Activated CD4-positive, alpha-beta memory T cell treated with anti-CD3 and anti-CD28 coated beads for 36 hours (primary cell): ENCODE measurements at regions of chr4 and their contacts with region 1.

Region 1: GRCh38 chr4:145808021-145808650 is 128.2 kb downstream of the C4orf51 start:
- DNase-seq: peak; percentile 60
- H3K4me3 Mint-ChIP-seq: peak overlapping the region; percentile 30
- H3K27ac Mint-ChIP-seq: peak overlapping the region; percentile 89
- H3K4me1 Mint-ChIP-seq: peaks cover 65% of the 10 kb centered on the region
- H3K27me3 Mint-ChIP-seq: no peaks in the 10 kb centered on the region

Region 2: GRCh38 chr4:145180298-145181090 is 627.6 kb before region 1 on chr4 and contains the start of gene OTUD4:
- CTCF ChIA-PET with region 1: no interaction called
- POLR2A ChIA-PET with region 1: no interaction called
- intact Hi-C with region 1: loop called (anchors 2 kb)
- DNase-seq: peak; percentile 97
- H3K4me3 Mint-ChIP-seq: peak within 1 kb of the TSS; percentile 96
- H3K27ac Mint-ChIP-seq: peak within 1 kb of the TSS; percentile 98
- H3K4me1 Mint-ChIP-seq: peaks cover 25% of the 10 kb centered on the region
- H3K27me3 Mint-ChIP-seq: no peaks in the 10 kb centered on the region
- total RNA-seq, gene OTUD4: 41.5 to 43.3 TPM

Region 3: GRCh38 chr4:145625677-145626622 is 182.2 kb before region 1 on chr4:
- CTCF ChIA-PET with region 1: no interaction called
- POLR2A ChIA-PET with region 1: no interaction called
- intact Hi-C with region 1: no loop called
- DNase-seq: no peak
- H3K4me3 Mint-ChIP-seq: no peak overlapping the region
- H3K27ac Mint-ChIP-seq: no peak overlapping the region
- H3K4me1 Mint-ChIP-seq: peaks cover 43% of the 10 kb centered on the region
- H3K27me3 Mint-ChIP-seq: no peaks in the 10 kb centered on the region

Region 4: GRCh38 chr4:145732895-145733880 is 74.9 kb before region 1 on chr4:
- CTCF ChIA-PET with region 1: no interaction called
- POLR2A ChIA-PET with region 1: no interaction called
- intact Hi-C with region 1: loop called (anchors 1 kb)
- DNase-seq: peak; percentile 92
- H3K4me3 Mint-ChIP-seq: peak overlapping the region; percentile 69
- H3K27ac Mint-ChIP-seq: peak overlapping the region; percentile 62
- H3K4me1 Mint-ChIP-seq: peaks cover 29% of the 10 kb centered on the region
- H3K27me3 Mint-ChIP-seq: peaks cover 6% of the 10 kb centered on the region

Region 5: GRCh38 chr4:145792429-145792828 is 15.7 kb before region 1 on chr4:
- CTCF ChIA-PET with region 1: no interaction called
- POLR2A ChIA-PET with region 1: no interaction called
- intact Hi-C with region 1: no loop called
- DNase-seq: no peak
- H3K4me3 Mint-ChIP-seq: no peak overlapping the region
- H3K27ac Mint-ChIP-seq: no peak overlapping the region
- H3K4me1 Mint-ChIP-seq: no peaks in the 10 kb centered on the region
- H3K27me3 Mint-ChIP-seq: no peaks in the 10 kb centered on the region

Region 6: DNA sequence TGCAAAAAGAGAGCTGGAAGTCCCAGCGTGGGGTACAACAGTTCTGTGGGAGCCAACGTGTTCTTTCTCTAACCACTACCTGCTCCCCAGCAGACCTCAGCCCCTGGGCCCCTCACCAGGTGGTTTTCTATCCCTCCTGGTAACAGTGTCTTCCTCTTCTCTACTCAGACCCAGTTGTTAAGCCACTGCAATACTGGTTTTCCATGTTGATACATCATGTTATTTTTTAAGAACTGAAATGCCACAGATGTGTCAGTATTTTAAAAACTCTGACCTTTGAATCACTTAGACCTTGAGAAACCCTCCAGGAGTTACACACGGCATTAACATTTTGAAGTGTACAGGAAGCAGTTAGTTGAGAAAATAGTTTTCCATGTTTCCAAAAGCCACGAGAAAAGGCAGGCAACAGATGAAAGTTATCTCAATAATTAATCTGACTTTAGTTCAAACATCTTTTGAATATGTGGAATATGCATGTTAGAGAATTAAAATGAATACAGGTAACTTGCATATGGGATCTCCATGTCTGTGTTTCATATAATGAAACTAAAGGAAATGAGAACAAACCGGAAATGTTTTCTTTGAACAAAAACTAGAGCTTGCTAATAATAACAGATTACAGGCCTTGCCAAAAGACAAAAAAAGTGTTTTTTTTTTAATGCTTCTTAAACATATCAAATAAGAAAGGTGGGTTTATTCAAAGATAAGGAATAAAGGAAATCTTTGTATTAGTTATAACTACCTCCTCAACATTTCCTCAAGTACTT is 21.7 kb after region 1 on chr4:
- CTCF ChIA-PET with region 1: interaction called, 3 read pairs
- POLR2A ChIA-PET with region 1: interaction called, 9 read pairs
- intact Hi-C with region 1: loop called (anchors 1 kb)
- DNase-seq: peak; percentile 73
- H3K4me3 Mint-ChIP-seq: peak overlapping the region; percentile 46
- H3K27ac Mint-ChIP-seq: peak overlapping the region; percentile 71
- H3K4me1 Mint-ChIP-seq: peaks cover 46% of the 10 kb centered on the region
- H3K27me3 Mint-ChIP-seq: no peaks in the 10 kb centered on the region

Region 7: GRCh38 chr4:146132445-146132844 is 324.3 kb after region 1 on chr4:
- CTCF ChIA-PET with region 1: no interaction called
- POLR2A ChIA-PET with region 1: no interaction called
- intact Hi-C with region 1: loop called (anchors 1 kb)
- DNase-seq: peak; percentile 86
- H3K4me3 Mint-ChIP-seq: no peak overlapping the region
- H3K27ac Mint-ChIP-seq: peak overlapping the region; percentile 26
- H3K4me1 Mint-ChIP-seq: peaks cover 17% of the 10 kb centered on the region
- H3K27me3 Mint-ChIP-seq: peaks cover 12% of the 10 kb centered on the region

Region 8: DNA sequence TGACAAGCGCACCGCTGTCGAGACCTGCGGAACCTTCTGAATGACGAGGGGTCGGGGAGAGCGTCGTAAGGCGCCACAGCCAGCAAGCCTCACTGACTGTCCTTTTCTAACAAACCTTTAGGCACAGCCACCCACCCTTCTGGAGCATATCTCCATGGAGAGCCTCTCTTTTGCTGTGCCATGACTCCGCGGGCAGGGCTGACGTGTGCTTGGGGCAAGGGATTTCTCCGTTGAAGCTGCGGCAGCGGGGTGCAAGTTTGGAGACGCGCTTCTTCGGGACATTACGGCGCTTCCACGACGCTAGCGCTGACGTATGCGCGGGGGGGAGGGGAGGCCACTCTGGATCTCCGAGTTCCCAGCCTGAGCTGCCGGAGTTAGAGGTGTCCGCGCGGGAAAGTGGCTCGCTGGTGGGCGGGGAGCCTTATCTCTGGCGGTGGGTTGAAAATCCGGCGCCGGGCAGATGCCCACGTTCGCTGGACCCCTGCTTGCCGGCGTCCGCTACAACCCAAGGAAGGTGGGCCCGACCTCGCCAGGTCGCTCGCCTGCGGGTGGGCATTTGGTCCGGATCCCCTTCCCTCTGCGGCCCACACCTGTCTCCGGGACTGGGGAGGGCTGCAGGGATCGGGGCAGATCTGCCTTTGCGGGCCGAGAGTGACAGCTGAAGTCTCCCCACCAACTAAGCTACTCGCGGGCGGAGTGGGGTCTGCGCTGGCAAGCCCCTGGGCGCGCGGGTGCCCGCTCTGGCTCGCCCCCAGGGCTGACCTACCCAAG is 714.1 kb after region 1 on chr4:
- CTCF ChIA-PET with region 1: no interaction called
- POLR2A ChIA-PET with region 1: no interaction called
- intact Hi-C with region 1: loop called (anchors 5 kb)
- DNase-seq: peak; percentile 88
- H3K4me3 Mint-ChIP-seq: no peak overlapping the region
- H3K27ac Mint-ChIP-seq: peak overlapping the region; percentile 57
- H3K4me1 Mint-ChIP-seq: peaks cover 19% of the 10 kb centered on the region
- H3K27me3 Mint-ChIP-seq: no peaks in the 10 kb centered on the region